Aorta (tissue), 5 donors: ENCODE measurements at regions of chr12 and their contacts with region 1.

Region 1: GRCh38 chr12:119673634-119674033 is 5.7 kb downstream of the PRKAB1 start:
- DNase-seq: no peak
- ATAC-seq: peak; percentile 61
- H3K4me3 ChIP-seq: no peak overlapping the region
- H3K27ac ChIP-seq: no peak overlapping the region
- H3K4me1 ChIP-seq: no peaks in the 10 kb centered on the region
- H3K27me3 ChIP-seq: no peaks in the 10 kb centered on the region

Region 2: DNA sequence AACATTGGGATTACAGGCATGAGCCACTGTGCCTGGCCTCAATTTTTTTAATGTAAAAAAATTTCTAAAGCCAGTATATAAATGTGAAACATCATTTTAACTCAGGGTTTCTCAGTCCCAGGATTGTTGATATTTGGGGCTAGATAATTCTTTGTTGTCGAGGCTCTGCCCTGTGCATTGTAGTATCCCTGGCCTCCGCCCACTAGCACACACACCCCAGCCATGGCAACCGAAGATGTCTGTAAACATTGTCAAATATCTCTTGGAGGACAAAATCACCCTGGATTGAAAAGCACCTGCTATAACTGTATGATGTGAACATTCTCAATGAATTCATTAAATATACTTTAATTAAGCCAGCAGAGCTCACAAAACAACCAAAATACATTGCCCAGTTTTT is 211.9 kb after region 1 on chr12:
- intact Hi-C with region 1: loop called in 1 of 2 experiments (anchors 10 kb)
- DNase-seq: no peak
- ATAC-seq: no peak
- H3K4me3 ChIP-seq: no peak overlapping the region
- H3K27ac ChIP-seq: no peak overlapping the region
- H3K4me1 ChIP-seq: no peaks in the 10 kb centered on the region
- H3K27me3 ChIP-seq: no peaks in the 10 kb centered on the region